ENCODE measurements at regions of chr3 and their contacts with region 1.

Region 1: DNA sequence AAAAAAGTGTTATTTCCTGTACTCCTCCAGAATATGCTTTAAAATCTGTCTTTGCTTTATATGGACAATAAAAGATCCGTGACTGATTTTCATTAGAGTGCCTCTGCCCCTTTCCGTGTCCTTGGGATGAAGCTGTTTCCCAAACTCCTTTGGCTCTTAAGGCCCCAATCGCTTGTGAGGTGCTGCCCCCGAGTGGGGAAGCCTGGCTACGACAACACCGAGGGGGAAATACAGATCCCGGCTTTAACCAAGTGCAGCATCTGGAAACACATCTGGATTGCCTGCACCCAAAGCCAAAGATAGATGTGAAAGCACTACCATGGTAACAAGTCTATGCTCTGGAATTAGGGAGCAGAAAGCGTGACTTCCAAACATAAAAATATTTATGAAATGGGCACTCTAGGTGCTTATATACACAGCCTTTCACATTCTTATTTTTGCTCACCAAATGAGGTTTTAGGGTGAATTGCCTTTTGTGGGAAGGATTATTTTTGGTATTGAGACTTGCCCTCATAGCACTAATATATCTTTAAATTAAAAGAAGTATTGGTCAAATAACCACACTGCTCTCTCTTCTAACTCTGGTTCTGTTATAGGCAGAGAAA is 40.6 kb upstream of the ADCY5 start:
- DNase-seq: peak; percentile 66 to 88 (median 86)
- H3K4me3 ChIP-seq: no peak overlapping the region
- H3K27ac ChIP-seq: no peak overlapping the region
- H3K4me1 ChIP-seq: peaks cover 2% of the 10 kb centered on the region
- H3K27me3 ChIP-seq: no peaks in the 10 kb centered on the region
- CTCF ChIP-seq: peak; percentile 88 to 93 (median 93)
- EP300 ChIP-seq: no peak
- POLR2A ChIP-seq: no peak

Region 2: DNA sequence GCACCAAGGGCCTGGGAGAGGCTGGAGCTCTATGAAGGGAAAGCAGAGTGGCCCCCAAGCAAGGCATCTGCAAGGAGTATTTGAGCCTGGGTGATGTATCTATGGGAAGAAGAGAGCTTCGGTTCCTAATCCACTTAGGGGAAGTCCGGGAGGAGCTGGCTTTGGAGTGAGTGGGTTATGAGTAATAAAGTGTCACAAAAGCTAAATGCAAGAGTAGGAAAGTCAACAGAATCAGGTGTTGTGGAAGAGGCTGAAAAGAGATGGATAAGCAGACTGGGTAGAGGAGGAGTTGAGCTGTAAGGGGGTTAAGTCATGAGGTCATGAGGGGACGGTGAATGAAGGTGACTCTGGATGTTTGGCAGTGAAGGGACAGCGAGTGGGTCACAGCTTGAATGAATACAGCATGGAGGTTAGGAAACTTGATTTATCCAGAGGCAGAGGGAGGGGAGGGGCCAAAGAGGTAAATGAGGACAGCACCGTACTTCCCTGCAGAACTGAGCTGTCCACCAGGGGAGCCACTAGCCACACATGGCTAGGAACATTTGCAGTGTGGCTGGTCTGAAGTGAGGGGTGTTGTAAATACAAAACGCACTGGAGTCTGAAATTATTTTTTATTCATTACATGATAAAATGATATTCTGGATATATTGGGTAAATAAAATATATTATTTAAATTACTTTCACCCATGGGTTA is 123.9 kb before region 1 on chr3:
- intact Hi-C with region 1: loop called in 1 of 4 experiments (anchors 1 kb)
- DNase-seq: peak in 1 of 5 donors; percentile 32
- H3K4me3 ChIP-seq: no peak overlapping the region
- H3K27ac ChIP-seq: no peak overlapping the region
- H3K4me1 ChIP-seq: peaks cover 2% of the 10 kb centered on the region
- H3K27me3 ChIP-seq: no peaks in the 10 kb centered on the region
- CTCF ChIP-seq: peak in 1 of 3 donors; percentile 21
- EP300 ChIP-seq: no peak
- POLR2A ChIP-seq: no peak

Region 3: DNA sequence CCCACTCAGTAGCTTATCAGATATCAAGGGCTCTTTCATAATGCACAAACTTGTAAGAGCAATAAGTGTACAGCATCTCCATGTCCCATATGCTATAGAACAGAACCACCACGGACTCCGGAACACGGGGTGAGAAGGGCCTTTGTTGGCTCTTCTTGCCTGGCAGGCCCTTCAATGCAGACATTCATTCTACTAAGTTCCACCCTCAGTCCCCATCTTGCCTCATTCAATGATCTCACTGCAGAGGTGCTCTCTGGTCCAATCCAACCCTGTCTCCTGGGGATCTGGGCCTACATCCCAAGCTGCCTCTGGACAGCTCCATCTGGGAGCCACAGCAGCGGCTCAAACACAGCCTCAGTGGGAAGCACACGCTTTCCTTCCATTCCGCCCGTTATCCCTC is 78.5 kb after region 1 on chr3:
- intact Hi-C with region 1: loop called in 1 of 4 experiments (anchors 10 kb)
- DNase-seq: no peak
- H3K4me3 ChIP-seq: no peak overlapping the region
- H3K27ac ChIP-seq: no peak overlapping the region
- H3K4me1 ChIP-seq: no peaks in the 10 kb centered on the region
- H3K27me3 ChIP-seq: no peaks in the 10 kb centered on the region
- CTCF ChIP-seq: no peak
- EP300 ChIP-seq: no peak
- POLR2A ChIP-seq: no peak

Region 4: DNA sequence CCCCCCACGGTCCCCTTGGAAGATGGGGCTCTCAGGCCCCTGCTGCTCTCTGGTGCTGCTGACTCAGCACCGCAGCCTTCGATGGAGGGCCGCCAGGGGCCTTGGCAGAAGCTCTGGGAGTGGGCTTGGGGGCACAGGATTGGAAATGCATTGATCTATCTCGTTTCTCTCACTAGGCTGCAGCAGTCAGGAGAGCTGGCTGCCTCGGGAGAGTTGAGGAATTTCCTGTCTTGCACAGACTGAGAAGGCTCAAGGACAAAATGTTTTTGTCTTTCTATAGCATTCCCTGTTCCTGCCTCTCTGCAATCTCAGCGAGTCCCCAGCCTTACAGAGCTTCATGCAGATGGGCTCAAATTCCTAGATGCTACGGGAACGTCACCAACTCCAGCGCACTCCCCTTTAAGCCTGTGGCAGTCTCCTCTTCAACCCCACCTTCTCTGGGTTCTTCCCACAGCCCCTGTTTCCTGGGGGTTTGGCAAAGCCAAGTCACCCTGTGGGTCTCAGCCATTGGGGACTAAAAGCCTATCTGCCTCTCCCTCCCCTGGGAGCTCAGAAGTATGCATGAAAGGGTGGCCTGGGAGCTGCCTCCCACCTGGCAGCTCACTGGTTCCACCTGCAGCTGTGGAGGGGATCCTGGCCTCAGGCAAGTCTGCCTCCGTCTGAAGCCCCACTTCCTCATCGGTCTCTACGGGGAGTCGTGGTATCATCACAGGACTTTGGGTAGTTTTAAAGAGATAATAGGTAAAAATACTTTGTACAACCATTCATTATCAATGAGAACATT is 222.8 kb after region 1 on chr3:
- intact Hi-C with region 1: no loop called
- DNase-seq: no peak
- H3K4me3 ChIP-seq: no peak overlapping the region
- H3K27ac ChIP-seq: peak overlapping the region in 1 of 2 donors; percentile 41
- H3K4me1 ChIP-seq: peaks cover 14% of the 10 kb centered on the region
- H3K27me3 ChIP-seq: no peaks in the 10 kb centered on the region
- CTCF ChIP-seq: no peak
- EP300 ChIP-seq: no peak
- POLR2A ChIP-seq: no peak

Measured in ovary (tissue), 10 donors.